Activated CD4-positive, alpha-beta memory T cell treated with anti-CD3 and anti-CD28 coated beads for 36 hours (primary cell): ENCODE measurements at regions of chr12 and their contacts with region 1.

Region 1: DNA sequence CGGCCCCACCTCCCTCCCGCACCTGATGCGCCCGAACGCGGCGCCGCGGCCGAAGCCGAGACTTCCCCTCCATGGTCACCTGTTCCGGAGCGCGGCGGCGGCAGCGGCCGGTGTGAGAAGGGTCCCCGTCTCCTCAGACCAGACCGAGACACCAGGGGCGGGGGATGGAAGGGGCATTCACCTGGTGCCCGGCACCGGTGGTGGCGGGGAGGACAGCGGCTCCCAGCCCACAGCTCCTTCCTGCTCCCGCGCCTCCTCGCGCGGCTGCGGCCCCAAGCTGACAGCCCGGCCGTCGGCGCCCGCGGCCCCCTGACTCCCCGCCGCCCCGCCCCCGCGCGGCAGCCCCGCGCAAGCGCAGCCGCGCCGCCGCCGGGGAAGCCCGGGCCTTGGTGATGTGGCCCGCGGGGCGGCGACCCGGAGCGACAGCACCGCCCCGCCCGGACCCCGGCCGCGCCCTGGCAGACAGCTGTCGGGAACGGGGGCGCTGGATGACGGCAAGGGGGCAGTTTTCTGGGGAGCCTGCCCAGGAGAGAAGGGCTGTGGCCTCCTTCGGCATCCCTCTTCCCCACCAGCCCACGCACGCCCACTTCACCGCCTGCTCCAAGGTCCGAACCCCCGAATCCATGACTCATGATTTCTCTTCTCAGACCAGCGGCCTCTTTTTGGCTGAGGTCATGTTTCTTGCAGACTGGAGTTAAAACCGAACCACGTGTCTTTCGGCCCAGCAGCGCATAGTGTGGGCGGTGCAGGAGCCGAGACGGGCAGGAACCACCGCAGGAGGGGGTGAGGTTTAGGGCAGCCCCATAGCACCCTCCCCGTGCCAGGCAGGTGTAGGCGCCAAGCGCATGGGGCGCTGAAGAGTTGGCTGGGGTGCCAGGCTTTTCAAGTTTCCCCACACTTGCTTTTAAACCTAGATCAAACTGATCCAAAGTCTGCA is at the start of gene SLC41A2:
- DNase-seq: peak; percentile 88
- H3K4me3 Mint-ChIP-seq: peak within 1 kb of the TSS; percentile 86
- H3K27ac Mint-ChIP-seq: peak within 1 kb of the TSS; percentile 77
- H3K4me1 Mint-ChIP-seq: peaks cover 25% of the 10 kb centered on the region
- H3K27me3 Mint-ChIP-seq: peaks cover 3% of the 10 kb centered on the region
- total RNA-seq, gene SLC41A2: 7.6 to 7.7 TPM

Region 2: DNA sequence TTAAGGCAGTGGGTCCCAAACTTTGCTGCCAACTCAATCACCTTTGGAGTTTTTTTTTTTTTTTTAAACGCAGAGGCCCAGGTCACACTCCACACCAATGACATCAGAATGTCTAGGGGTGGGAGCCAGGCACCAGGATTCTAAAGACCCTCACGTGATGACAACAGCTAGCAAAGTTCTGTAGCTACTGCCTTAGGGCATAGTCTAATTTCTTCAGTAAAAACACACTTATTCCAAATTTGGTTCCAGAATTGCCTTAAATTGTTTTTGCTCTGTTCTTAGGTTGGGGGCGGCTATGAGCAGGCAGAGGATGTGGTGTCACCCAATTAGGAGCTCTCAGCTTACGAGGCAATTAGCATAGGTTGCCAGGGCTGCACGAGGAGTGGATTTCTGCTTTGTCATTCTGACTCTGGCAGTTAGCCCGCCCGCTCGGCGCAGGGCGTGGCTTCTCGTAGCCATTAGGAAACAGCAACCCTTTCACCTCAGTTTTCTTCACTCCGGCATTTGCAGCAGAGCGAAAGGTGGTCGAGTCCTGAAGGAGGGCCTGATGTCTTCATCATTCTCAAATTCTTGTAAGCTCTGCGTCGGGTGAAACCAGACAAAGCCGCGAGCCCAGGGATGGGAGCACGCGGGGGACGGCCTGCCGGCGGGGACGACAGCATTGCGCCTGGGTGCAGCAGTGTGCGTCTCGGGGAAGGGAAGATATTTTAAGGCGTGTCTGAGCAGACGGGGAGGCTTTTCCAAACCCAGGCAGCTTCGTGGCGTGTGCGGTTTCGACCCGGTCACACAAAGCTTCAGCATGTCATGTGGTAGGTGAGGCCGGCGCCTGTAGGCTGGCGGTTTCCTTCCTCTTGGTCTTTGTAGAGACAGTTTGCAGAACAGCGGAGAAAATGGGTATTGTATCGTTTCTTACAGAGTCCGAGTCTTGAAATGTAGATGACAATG is 671.5 kb before region 1 on chr12:
- CTCF ChIA-PET with region 1: no interaction called
- POLR2A ChIA-PET with region 1: no interaction called
- intact Hi-C with region 1: loop called (anchors 5 kb)
- DNase-seq: peak; percentile 94
- H3K4me3 Mint-ChIP-seq: peak overlapping the region; percentile 98
- H3K27ac Mint-ChIP-seq: peak overlapping the region; percentile 99
- H3K4me1 Mint-ChIP-seq: peaks cover 16% of the 10 kb centered on the region
- H3K27me3 Mint-ChIP-seq: no peaks in the 10 kb centered on the region

Region 3: GRCh38 chr12:104680066-104680465 is 278.2 kb before region 1 on chr12:
- CTCF ChIA-PET with region 1: no interaction called
- POLR2A ChIA-PET with region 1: no interaction called
- intact Hi-C with region 1: loop called (anchors 2 kb)
- DNase-seq: peak; percentile 58
- H3K4me3 Mint-ChIP-seq: no peak overlapping the region
- H3K27ac Mint-ChIP-seq: peak overlapping the region; percentile 75
- H3K4me1 Mint-ChIP-seq: peaks cover 74% of the 10 kb centered on the region
- H3K27me3 Mint-ChIP-seq: no peaks in the 10 kb centered on the region

Region 4: DNA sequence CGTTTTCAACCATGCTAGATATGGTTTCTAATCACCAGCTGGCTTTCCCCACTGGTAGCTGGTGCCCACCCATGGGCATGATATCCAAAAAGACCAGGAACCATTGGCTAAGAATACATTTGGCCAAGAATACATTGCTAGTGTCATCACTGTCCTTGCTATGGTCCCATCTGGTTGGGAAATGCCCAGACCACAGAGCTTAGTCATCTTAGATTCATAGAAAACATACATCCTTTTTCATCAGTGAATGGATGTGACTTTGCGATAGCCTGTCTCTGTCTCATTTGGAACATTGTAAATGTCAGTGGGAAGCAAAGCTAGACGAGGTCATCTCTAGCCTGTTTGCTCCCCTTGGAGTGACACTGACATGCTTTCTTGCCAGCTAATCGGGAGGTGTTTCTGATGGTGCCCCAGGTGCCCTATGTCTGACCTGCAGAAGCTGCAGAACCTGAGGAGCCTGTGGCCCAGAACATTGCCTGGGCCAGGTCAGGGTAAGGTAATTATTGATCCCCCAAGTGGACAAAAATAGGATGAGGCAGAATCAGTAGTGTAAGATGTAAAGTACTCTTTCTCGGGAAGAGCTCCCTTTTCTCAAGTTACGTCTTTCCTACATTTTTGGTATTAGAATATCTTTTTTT is 195.0 kb before region 1 on chr12:
- CTCF ChIA-PET with region 1: no interaction called
- POLR2A ChIA-PET with region 1: interaction called, 3 read pairs
- intact Hi-C with region 1: loop called (anchors 10 kb)
- DNase-seq: peak; percentile 49
- H3K4me3 Mint-ChIP-seq: no peak overlapping the region
- H3K27ac Mint-ChIP-seq: peak overlapping the region; percentile 44
- H3K4me1 Mint-ChIP-seq: peaks cover 23% of the 10 kb centered on the region
- H3K27me3 Mint-ChIP-seq: no peaks in the 10 kb centered on the region

Region 5: GRCh38 chr12:104986022-104986941 is 28.0 kb after region 1 on chr12 and contains the start of gene NOPCHAP1:
- CTCF ChIA-PET with region 1: interaction called, 4 read pairs
- POLR2A ChIA-PET with region 1: interaction called, 12 read pairs
- intact Hi-C with region 1: loop called (anchors 2 kb)
- DNase-seq: peak; percentile 91
- H3K4me3 Mint-ChIP-seq: peak within 1 kb of the TSS; percentile 77
- H3K27ac Mint-ChIP-seq: peak within 1 kb of the TSS; percentile 59
- H3K4me1 Mint-ChIP-seq: peaks cover 28% of the 10 kb centered on the region
- H3K27me3 Mint-ChIP-seq: peaks cover 3% of the 10 kb centered on the region
- total RNA-seq, gene NOPCHAP1: 30.5 to 30.9 TPM

Region 6: DNA sequence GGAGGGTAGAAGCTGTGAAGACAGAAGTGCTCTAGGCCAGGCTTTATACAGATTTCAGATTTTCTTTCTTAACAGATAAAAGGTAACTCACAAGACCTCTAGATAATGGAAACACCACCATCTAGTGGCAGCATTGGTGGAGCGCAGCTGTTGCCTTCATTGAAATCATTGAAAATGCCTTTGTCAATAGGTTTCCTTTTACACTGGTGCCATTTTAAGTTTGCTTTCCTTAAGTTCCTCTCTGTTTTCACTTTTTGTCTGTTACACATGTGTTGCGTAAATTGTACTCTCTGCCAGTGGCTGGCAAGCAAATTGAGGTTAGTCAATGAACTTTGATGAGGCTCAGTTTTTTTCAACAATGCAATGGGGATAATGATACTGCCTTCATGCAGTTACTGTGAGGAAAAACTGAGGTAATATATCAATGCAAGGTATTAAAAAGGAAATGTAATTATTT is 94.9 kb after region 1 on chr12:
- CTCF ChIA-PET with region 1: interaction called, 4 read pairs
- POLR2A ChIA-PET with region 1: no interaction called
- intact Hi-C with region 1: loop called (anchors 5 kb)
- DNase-seq: peak; percentile 87
- H3K4me3 Mint-ChIP-seq: no peak overlapping the region
- H3K27ac Mint-ChIP-seq: no peak overlapping the region
- H3K4me1 Mint-ChIP-seq: peaks cover 5% of the 10 kb centered on the region
- H3K27me3 Mint-ChIP-seq: no peaks in the 10 kb centered on the region

Region 7: DNA sequence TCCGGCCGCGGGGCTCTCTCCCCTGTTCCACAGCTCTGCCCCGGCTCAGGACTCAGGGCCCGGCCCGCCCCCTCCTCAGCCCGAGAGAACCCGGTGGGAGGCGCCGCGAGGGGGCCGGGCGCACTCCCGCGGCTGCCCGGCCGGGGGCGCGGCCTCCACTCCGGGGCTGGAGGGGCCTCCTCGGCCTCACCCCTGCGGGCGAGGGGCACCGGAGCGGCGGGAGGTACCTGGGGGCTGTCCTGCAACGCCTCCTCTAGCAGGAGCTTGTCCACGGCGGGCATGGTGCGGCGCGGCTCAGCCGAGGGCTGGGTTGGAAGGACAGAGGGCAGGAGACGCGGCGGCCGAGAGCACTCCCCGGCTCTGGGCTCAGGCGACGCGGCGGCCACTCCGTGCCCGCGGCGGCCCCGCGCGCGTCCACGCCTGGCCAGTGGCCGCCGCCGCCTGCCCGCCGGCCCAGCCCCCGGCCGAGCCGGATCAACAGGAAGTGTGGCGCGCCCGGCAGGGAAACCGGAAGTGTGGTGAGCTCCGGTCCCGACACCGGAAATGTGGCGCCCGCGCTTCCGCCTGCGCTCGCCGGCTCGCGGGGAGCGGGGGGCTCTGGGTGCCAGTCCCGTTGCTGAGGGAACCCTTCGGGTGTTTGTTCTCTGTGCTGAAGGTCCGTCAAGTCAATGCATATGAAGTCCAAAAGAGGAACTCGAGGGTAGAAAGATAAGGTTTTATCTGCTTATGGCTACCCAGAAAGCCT is 277.6 kb after region 1 on chr12 and contains the start of gene APPL2:
- CTCF ChIA-PET with region 1: no interaction called
- POLR2A ChIA-PET with region 1: no interaction called
- intact Hi-C with region 1: loop called (anchors 10 kb)
- DNase-seq: peak; percentile 86
- H3K4me3 Mint-ChIP-seq: peak within 1 kb of the TSS; percentile 88
- H3K27ac Mint-ChIP-seq: peak within 1 kb of the TSS; percentile 85
- H3K4me1 Mint-ChIP-seq: peaks cover 37% of the 10 kb centered on the region
- H3K27me3 Mint-ChIP-seq: no peaks in the 10 kb centered on the region
- total RNA-seq, gene APPL2: 21.4 to 21.5 TPM